Activated CD4-positive, alpha-beta memory T cell treated with anti-CD3 and anti-CD28 coated beads, Interleukin-2, amount 10 ng/mL, durations not matched to agents 7 days and 5 days (primary cell): ENCODE measurements at regions of chr20 and their contacts with region 1.

Region 1: GRCh38 chr20:1734269-1734858 is 76.8 kb upstream of the SIRPG start:
- DNase-seq: peak; percentile 38
- H3K4me3 Mint-ChIP-seq: no peak overlapping the region
- H3K27ac Mint-ChIP-seq: no peak overlapping the region
- H3K4me1 Mint-ChIP-seq: peaks cover 28% of the 10 kb centered on the region
- H3K27me3 Mint-ChIP-seq: peaks cover 5% of the 10 kb centered on the region

Region 2: GRCh38 chr20:1503564-1504227 is 230.7 kb before region 1 on chr20:
- CTCF ChIA-PET with region 1: interaction called, 14 read pairs
- POLR2A ChIA-PET with region 1: interaction called, 5 read pairs
- DNase-seq: peak; percentile 77
- H3K4me3 Mint-ChIP-seq: no peak overlapping the region
- H3K27ac Mint-ChIP-seq: no peak overlapping the region
- H3K4me1 Mint-ChIP-seq: peaks cover 3% of the 10 kb centered on the region
- H3K27me3 Mint-ChIP-seq: peaks cover 58% of the 10 kb centered on the region

Region 3: GRCh38 chr20:1509237-1509636 is 225.1 kb before region 1 on chr20:
- CTCF ChIA-PET with region 1: interaction called, 14 read pairs
- POLR2A ChIA-PET with region 1: interaction called, 5 read pairs
- DNase-seq: no peak
- H3K4me3 Mint-ChIP-seq: no peak overlapping the region
- H3K27ac Mint-ChIP-seq: no peak overlapping the region
- H3K4me1 Mint-ChIP-seq: no peaks in the 10 kb centered on the region
- H3K27me3 Mint-ChIP-seq: peaks cover 45% of the 10 kb centered on the region

Region 4: GRCh38 chr20:1533059-1533458 is 201.3 kb before region 1 on chr20:
- CTCF ChIA-PET with region 1: interaction called, 19 read pairs
- POLR2A ChIA-PET with region 1: interaction called, 3 read pairs
- DNase-seq: no peak
- H3K4me3 Mint-ChIP-seq: no peak overlapping the region
- H3K27ac Mint-ChIP-seq: no peak overlapping the region
- H3K4me1 Mint-ChIP-seq: no peaks in the 10 kb centered on the region
- H3K27me3 Mint-ChIP-seq: peaks cover 15% of the 10 kb centered on the region

Region 5: DNA sequence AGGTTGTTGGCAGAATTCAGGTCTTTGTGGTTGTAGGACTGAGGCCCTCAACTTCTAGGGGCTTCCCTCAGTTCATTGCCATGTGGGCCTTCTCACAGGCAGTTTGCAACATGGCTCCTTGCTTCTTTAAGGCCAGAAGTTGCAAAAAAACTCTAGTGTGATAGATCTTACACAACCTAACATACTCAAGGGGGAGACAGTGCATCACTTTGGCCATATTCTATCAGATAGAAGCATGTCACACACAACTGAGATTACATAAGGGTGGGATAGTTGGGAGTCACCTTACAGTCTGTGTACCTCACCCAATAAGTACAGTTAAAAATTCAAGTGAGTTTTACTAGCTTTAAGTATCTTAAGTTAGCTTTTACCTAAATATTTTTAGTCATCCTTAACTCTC is 178.4 kb before region 1 on chr20:
- CTCF ChIA-PET with region 1: interaction called, 17 read pairs
- POLR2A ChIA-PET with region 1: interaction called, 4 read pairs
- DNase-seq: no peak
- H3K4me3 Mint-ChIP-seq: no peak overlapping the region
- H3K27ac Mint-ChIP-seq: no peak overlapping the region
- H3K4me1 Mint-ChIP-seq: peaks cover 3% of the 10 kb centered on the region
- H3K27me3 Mint-ChIP-seq: no peaks in the 10 kb centered on the region